ENCODE measurements at regions of chr6 and their contacts with region 1.

Region 1: DNA sequence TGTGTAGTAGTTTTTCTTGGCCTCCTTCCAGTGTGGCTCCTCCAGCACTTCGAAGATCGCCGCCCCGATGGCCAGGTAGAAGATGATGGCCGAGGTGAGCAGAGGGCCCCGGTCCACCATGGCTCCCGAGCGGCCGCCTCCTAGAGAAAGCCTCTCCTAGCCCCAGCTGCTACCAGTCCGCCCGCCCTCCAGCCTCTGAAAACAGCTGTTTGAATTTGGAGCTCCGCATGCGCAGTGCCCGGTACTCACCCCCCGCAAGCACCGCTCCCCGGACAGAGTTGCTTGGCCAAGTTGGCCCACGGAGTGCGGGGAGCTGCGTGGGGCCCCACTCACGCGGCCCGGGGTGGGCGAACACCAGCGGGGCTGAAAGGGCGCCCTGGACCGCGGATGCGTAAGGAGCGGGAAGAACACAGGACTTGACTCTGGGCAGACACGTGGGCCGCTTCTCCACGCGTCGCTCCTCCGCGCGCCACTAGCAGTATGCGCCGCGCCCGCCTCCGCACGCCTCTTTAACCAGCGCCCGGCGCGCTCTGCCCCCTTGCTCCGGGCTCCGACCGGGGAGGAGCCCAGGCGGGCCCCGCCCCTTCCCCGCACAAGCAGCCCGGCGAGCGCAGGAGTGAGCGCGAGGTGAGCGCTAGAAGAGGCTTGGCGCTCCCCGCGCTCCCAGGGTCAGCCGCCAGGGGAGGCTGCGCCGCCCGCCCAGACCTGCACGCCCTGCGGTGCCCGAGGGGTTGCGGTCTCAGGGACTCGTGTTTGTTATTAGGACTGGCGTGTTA is at the start of gene KCNK5:
- DNase-seq: peak; percentile 91
- ATAC-seq: peak; percentile 95
- H3K4me3 Mint-ChIP-seq: peak within 1 kb of the TSS; percentile 88
- H3K27ac Mint-ChIP-seq: peak within 1 kb of the TSS; percentile 94
- H3K4me1 Mint-ChIP-seq: peaks cover 50% of the 10 kb centered on the region
- H3K27me3 Mint-ChIP-seq: no peaks in the 10 kb centered on the region
- total RNA-seq, gene KCNK5: 12.0 TPM

Region 2: DNA sequence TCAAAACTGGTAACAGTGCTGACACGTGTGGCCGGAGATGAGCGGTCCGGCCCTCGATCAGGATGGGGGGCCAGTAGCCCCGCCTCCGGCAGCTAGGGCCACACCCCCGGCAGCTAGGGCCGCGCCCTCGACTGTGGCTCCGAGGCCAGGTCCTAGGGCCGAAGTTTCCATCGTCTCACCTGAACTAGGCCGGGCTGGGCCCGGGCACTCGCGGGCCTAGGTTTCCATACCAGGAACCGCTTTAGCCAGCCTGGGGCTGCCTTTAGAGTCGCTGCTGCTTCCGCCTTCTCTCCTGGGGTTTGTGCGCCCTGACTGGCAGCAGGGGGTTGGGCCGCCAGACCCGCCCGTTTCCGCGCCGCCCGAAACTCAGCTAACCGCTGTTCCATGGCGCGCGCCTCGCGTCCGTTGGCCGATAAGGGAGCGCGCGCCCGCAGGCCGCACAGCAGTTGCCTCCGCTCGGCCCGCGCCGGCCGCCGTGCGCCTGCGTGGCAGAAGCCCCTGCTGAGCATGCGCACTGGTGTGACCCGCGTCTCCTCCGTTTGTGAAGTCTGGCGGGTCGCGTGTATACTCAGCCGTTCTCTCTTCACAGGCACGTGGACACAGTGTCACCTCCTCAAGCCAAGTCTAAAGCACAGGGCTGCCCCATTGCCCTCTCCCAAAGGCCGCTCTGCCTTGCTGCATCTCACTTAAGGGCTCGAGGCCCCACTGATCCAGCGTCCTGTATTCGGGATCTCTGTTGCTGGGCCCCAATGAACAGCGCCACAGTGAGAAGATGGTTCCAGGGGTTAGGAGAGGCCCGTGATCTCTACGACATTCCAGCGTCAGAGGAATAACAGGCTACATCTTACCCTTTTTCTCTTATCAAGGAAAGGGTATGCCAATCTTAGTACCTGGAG is 114.2 kb before region 1 on chr6 and contains the start of gene SAYSD1:
- CTCF ChIA-PET with region 1: no interaction called
- POLR2A ChIA-PET with region 1: interaction called, 11 read pairs
- DNase-seq: peak; percentile 95
- ATAC-seq: peak; percentile 89
- H3K4me3 Mint-ChIP-seq: peak within 1 kb of the TSS; percentile 87
- H3K27ac Mint-ChIP-seq: peak within 1 kb of the TSS; percentile 96
- H3K4me1 Mint-ChIP-seq: peaks cover 58% of the 10 kb centered on the region
- H3K27me3 Mint-ChIP-seq: peaks cover 1% of the 10 kb centered on the region
- total RNA-seq, gene SAYSD1: 11.0 to 11.8 TPM

Region 3: GRCh38 chr6:39218873-39219536 is 10.2 kb before region 1 on chr6:
- CTCF ChIA-PET with region 1: interaction called, 27 read pairs
- POLR2A ChIA-PET with region 1: interaction called, 9 read pairs
- DNase-seq: peak; percentile 33
- ATAC-seq: peak; percentile 52
- H3K4me3 Mint-ChIP-seq: peak overlapping the region; percentile 16
- H3K27ac Mint-ChIP-seq: peak overlapping the region; percentile 86
- H3K4me1 Mint-ChIP-seq: peaks cover 90% of the 10 kb centered on the region
- H3K27me3 Mint-ChIP-seq: no peaks in the 10 kb centered on the region

Region 4: DNA sequence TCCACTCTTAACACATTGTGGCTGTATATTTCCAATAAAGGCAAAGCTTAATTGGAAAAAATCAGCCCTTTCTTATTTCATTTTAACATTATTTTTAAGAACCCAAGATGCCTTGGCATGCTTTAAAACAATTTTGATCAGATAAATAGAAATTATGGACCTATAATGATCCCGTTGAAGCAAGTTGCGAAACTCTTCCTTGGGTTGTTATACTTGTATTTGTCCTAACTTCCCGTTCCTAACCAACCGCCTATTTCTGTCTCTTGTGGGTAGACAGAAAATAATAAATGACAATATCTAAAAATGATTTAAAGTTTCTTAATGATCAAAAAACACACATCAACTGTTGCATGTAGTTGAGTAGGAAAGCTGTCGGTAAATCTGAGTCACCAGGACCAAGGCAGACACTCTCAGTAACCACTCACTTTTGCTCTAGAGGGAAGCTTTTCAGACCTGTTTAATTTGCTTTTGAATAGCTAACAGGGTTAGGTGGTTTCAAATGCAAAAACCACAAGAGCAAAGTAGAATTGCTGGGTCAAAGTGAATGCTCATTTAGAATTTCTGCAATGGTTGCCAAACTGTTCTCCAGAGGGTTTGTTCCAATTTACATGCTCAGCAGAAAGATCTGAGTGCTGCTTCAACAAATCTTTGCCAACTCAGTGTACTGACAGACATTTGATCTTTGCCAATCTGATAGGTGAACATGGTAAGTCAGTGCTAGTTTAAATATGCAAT is 34.3 kb after region 1 on chr6:
- CTCF ChIA-PET with region 1: no interaction called
- POLR2A ChIA-PET with region 1: no interaction called
- DNase-seq: no peak
- ATAC-seq: no peak
- H3K4me3 Mint-ChIP-seq: no peak overlapping the region
- H3K27ac Mint-ChIP-seq: no peak overlapping the region
- H3K4me1 Mint-ChIP-seq: no peaks in the 10 kb centered on the region
- H3K27me3 Mint-ChIP-seq: peaks cover 2% of the 10 kb centered on the region